B cell (primary cell): ENCODE measurements at regions of chr19 and their contacts with region 1.

Region 1: DNA sequence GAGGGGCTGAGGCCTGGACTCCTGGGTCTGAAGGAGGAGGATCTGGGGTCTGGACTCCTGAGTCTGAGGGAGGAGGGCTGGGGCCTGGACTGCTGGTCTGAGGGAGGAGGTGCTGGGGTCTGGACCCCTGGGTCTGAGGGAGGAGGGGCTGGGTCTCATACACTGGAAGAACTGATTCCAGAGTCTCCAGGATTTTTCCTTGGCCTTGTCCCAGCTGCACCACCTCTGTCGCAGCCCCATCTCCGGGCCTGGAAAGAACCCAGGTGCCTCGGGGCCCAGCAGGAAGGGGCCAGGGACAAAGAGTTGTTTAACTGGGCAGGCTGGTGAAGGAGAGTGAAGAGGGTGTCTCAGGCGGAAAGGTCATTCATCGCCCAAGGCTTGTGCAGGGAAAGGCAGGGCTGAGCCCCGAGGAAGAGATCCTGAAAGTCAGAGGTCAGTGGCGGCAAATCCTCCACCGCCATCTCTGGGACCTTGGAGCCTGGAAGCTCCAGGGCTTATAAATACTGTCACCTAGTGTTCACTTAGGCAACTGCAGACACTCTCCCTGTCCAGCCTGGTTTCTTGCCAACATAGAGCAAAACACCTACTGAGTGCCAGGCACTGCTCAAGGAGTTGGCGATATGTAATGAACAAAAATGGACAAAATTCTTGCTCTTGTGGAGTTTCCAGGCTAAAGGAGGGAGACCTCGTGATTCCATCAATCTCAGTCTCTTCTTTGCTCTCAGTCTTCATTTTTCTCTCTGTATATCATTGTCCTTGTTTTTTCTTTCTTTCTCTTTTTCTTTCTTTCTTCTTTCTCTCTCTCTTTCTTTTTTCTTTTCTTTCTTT is 4.4 kb upstream of the KCNN4 start:
- DNase-seq: peak; percentile 84
- ATAC-seq: peak; percentile 25
- H3K4me3 ChIP-seq: no peak overlapping the region
- H3K4me3 Mint-ChIP-seq: peak overlapping the region; percentile 68
- H3K27ac ChIP-seq: peak overlapping the region; percentile 73 to 85
- H3K27ac Mint-ChIP-seq: peak overlapping the region; percentile 99
- H3K4me1 ChIP-seq: peaks cover 38 to 51% of the 10 kb centered on the region in 2 donors
- H3K4me1 Mint-ChIP-seq: peaks cover 47% of the 10 kb centered on the region
- H3K27me3 ChIP-seq: no peaks in the 10 kb centered on the region
- H3K27me3 Mint-ChIP-seq: no peaks in the 10 kb centered on the region
- CTCF ChIP-seq: peak; percentile 99

Region 2: GRCh38 chr19:43575156-43575950 is 209.8 kb before region 1 on chr19 and contains the starts of genes PINLYP and XRCC1:
- CTCF ChIA-PET with region 1: no interaction called
- POLR2A ChIA-PET with region 1: no interaction called
- intact Hi-C with region 1: loop called (anchors 1 kb)
- DNase-seq: peak; percentile 99
- ATAC-seq: peak; percentile 99
- H3K4me3 ChIP-seq: peak within 1 kb of the TSS; percentile 67 to 98 (median 82)
- H3K4me3 Mint-ChIP-seq: peak within 1 kb of the TSS; percentile 97
- H3K27ac ChIP-seq: peak within 1 kb of the TSS; percentile 74 to 89
- H3K27ac Mint-ChIP-seq: peak within 1 kb of the TSS; percentile 92
- H3K4me1 ChIP-seq: peaks cover 16 to 29% of the 10 kb centered on the region in 2 donors
- H3K4me1 Mint-ChIP-seq: peaks cover 42% of the 10 kb centered on the region
- H3K27me3 ChIP-seq: no peaks in the 10 kb centered on the region
- H3K27me3 Mint-ChIP-seq: no peaks in the 10 kb centered on the region
- CTCF ChIP-seq: no peak
- total RNA-seq, gene PINLYP: 0.97 and 2.9 TPM in 2 replicates
- total RNA-seq, gene XRCC1: 38.2 and 47.4 TPM in 2 replicates

Region 3: DNA sequence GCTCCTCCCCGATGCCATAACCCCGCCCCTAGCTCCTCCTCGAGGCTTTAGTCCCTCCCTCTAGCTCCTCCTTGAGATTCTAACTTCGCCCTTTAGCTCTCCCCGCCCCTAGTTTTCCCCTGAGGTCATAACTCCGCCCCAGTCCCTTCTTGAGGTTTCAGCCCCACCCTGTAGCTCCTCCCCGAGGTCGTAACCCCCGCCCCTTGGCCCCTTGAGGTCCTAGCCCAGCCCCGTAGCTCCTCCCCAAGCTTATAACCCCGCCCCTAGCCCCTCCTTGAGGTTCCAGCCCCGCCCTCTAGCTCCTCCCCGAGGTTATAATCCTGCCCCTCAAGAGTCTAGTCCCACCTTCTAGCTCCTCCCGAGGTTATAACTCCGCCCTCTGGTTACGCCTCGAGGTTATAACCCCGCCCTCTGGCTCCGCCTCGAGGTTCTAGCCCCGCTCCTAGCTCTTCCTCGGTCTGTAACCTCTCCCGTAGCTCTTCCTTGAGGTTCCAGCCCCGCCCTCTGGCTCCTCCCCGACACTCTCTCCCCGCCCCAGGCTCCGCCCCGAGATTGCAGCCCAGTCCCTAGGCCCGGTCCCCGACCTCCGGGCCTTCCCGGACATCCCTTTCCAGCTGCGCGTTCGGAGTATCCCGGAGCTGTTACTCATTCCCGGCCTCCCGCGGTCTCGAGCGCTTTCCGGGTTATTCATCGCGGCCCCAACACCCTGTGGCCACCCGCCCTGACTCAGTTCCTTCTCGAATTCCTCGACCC is 116.6 kb before region 1 on chr19:
- CTCF ChIA-PET with region 1: no interaction called
- POLR2A ChIA-PET with region 1: no interaction called
- intact Hi-C with region 1: loop called (anchors 2 kb)
- DNase-seq: peak; percentile 92
- ATAC-seq: peak; percentile 85
- H3K4me3 ChIP-seq: peak overlapping the region; percentile 35 to 79 (median 59)
- H3K4me3 Mint-ChIP-seq: peak overlapping the region; percentile 84
- H3K27ac ChIP-seq: no peak overlapping the region
- H3K27ac Mint-ChIP-seq: peak overlapping the region; percentile 39
- H3K4me1 ChIP-seq: peaks cover 35 to 42% of the 10 kb centered on the region in 2 donors
- H3K4me1 Mint-ChIP-seq: peaks cover 37% of the 10 kb centered on the region
- H3K27me3 ChIP-seq: peaks cover 0 to 27% (median 7%) of the 10 kb centered on the region in 4 experiments
- H3K27me3 Mint-ChIP-seq: peaks cover 14% of the 10 kb centered on the region
- CTCF ChIP-seq: no peak

Region 4: GRCh38 chr19:43743022-43743421 is 42.2 kb before region 1 on chr19:
- CTCF ChIA-PET with region 1: interaction called, 237 read pairs
- POLR2A ChIA-PET with region 1: interaction called, 12 read pairs
- intact Hi-C with region 1: loop called (anchors 1 kb)
- DNase-seq: no peak
- ATAC-seq: no peak
- H3K4me3 ChIP-seq: no peak overlapping the region
- H3K4me3 Mint-ChIP-seq: no peak overlapping the region
- H3K27ac ChIP-seq: no peak overlapping the region
- H3K27ac Mint-ChIP-seq: no peak overlapping the region
- H3K4me1 ChIP-seq: peaks cover 9 to 20% of the 10 kb centered on the region in 2 donors
- H3K4me1 Mint-ChIP-seq: peaks cover 21% of the 10 kb centered on the region
- H3K27me3 ChIP-seq: no peaks in the 10 kb centered on the region
- H3K27me3 Mint-ChIP-seq: no peaks in the 10 kb centered on the region
- CTCF ChIP-seq: no peak

Region 5: GRCh38 chr19:43754503-43755255 is 30.5 kb before region 1 on chr19 and contains the start of gene SMG9:
- CTCF ChIA-PET with region 1: interaction called, 237 read pairs
- POLR2A ChIA-PET with region 1: interaction called, 89 read pairs
- intact Hi-C with region 1: loop called (anchors 1 kb)
- DNase-seq: peak; percentile 99
- ATAC-seq: peak; percentile 81
- H3K4me3 ChIP-seq: peak within 1 kb of the TSS; percentile 63 to 88 (median 84)
- H3K4me3 Mint-ChIP-seq: peak within 1 kb of the TSS; percentile 99
- H3K27ac ChIP-seq: peak within 1 kb of the TSS; percentile 93 to 98
- H3K27ac Mint-ChIP-seq: peak within 1 kb of the TSS; percentile 100
- H3K4me1 ChIP-seq: peaks cover 27 to 58% of the 10 kb centered on the region in 2 donors
- H3K4me1 Mint-ChIP-seq: peaks cover 71% of the 10 kb centered on the region
- H3K27me3 ChIP-seq: no peaks in the 10 kb centered on the region
- H3K27me3 Mint-ChIP-seq: no peaks in the 10 kb centered on the region
- CTCF ChIP-seq: no peak
- total RNA-seq, gene SMG9: 87.5 and 89.9 TPM in 2 replicates

Region 6: GRCh38 chr19:43765109-43765876 is 19.9 kb before region 1 on chr19:
- CTCF ChIA-PET with region 1: interaction called, 204 read pairs
- POLR2A ChIA-PET with region 1: interaction called, 75 read pairs
- intact Hi-C with region 1: loop called (anchors 1 kb)
- DNase-seq: peak; percentile 82
- ATAC-seq: peak; percentile 86
- H3K4me3 ChIP-seq: peak overlapping the region in 2 of 5 experiments; percentile 23 to 34
- H3K4me3 Mint-ChIP-seq: peak overlapping the region; percentile 72
- H3K27ac ChIP-seq: peak overlapping the region; percentile 88 to 92
- H3K27ac Mint-ChIP-seq: peak overlapping the region; percentile 87
- H3K4me1 ChIP-seq: peaks cover 42 to 57% of the 10 kb centered on the region in 2 donors
- H3K4me1 Mint-ChIP-seq: peaks cover 61% of the 10 kb centered on the region
- H3K27me3 ChIP-seq: no peaks in the 10 kb centered on the region
- H3K27me3 Mint-ChIP-seq: no peaks in the 10 kb centered on the region
- CTCF ChIP-seq: no peak

Region 7: DNA sequence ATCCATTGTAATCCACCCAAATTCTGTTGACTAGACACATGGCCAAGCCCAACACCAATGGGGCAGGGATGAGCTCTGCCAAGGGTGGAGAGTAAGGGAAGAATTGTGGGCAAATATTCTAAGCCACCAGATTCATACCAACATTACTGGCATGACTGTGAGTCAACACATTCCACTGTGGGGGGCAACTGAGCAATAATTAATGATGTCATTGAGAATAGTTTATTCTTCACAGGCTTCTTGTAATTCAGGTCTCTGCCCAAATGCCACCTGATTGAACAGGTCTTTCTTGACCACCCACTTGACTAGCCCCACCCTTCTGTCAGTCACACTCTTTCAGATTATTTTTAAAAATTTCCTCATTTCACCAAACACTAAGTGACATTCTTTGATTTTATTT is 70.4 kb after region 1 on chr19:
- CTCF ChIA-PET with region 1: no interaction called
- POLR2A ChIA-PET with region 1: no interaction called
- intact Hi-C with region 1: no loop called
- DNase-seq: no peak
- ATAC-seq: no peak
- H3K4me3 ChIP-seq: peak overlapping the region in 1 of 5 experiments; percentile 14
- H3K4me3 Mint-ChIP-seq: no peak overlapping the region
- H3K27ac ChIP-seq: no peak overlapping the region
- H3K27ac Mint-ChIP-seq: no peak overlapping the region
- H3K4me1 ChIP-seq: no peaks in the 10 kb centered on the region
- H3K4me1 Mint-ChIP-seq: no peaks in the 10 kb centered on the region
- H3K27me3 ChIP-seq: no peaks in the 10 kb centered on the region
- H3K27me3 Mint-ChIP-seq: no peaks in the 10 kb centered on the region
- CTCF ChIP-seq: no peak

Region 8: GRCh38 chr19:45178262-45179071 is 1393.3 kb after region 1 on chr19 and contains the start of gene BLOC1S3:
- CTCF ChIA-PET with region 1: no interaction called
- POLR2A ChIA-PET with region 1: interaction called, 17 read pairs
- intact Hi-C with region 1: no loop called
- DNase-seq: peak; percentile 100
- ATAC-seq: peak; percentile 88
- H3K4me3 ChIP-seq: peak within 1 kb of the TSS; percentile 93 to 99 (median 95)
- H3K4me3 Mint-ChIP-seq: peak within 1 kb of the TSS; percentile 95
- H3K27ac ChIP-seq: peak within 1 kb of the TSS; percentile 86 to 91
- H3K27ac Mint-ChIP-seq: peak within 1 kb of the TSS; percentile 96
- H3K4me1 ChIP-seq: peaks cover 24 to 35% of the 10 kb centered on the region in 2 donors
- H3K4me1 Mint-ChIP-seq: peaks cover 39% of the 10 kb centered on the region
- H3K27me3 ChIP-seq: no peaks in the 10 kb centered on the region
- H3K27me3 Mint-ChIP-seq: no peaks in the 10 kb centered on the region
- CTCF ChIP-seq: peak; percentile 38
- total RNA-seq, gene BLOC1S3: 21.1 and 31.8 TPM in 2 replicates